Gastrocnemius medialis (tissue), 4 donors: ENCODE measurements at regions of chr17 and their contacts with region 1.

Region 1: DNA sequence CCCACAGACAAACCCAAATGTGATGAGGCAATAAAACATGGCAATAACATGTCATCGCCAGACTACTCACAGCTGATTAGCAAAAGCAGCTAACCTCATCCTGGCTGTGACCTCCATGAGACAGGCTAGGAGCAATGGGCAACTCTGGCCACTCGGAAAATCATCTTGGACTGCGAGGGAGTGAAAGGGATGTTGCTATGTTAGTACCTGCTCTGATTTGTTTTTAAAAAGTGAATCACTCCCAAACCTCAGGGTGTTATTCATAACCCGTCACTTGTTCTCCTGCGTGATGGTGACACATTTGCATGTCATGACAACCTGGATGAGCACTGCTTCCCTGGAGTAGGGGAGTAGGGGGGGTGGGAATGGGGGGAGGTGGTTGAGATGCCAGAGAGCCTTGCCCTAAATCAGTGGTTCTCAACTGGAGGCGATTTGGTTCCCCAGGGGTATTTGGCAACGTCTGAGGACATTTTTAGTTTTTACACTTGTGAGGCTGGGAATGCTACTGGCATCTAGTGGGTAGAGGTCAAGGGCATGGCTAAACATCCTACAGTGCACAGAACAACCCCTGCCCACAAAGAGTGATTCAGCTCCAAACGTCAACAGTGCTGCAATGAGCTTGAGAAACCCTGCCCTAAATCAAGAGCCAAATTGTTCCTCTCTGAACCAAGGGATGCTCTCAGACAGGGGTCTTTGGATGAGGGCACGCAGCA is 241.7 kb downstream of the SOX9 start:
- DNase-seq: no peak
- ATAC-seq: no peak
- H3K4me3 ChIP-seq: no peak overlapping the region
- H3K27ac ChIP-seq: no peak overlapping the region
- H3K4me1 ChIP-seq: no peaks in the 10 kb centered on the region
- H3K27me3 ChIP-seq: no peaks in the 10 kb centered on the region
- CTCF ChIP-seq: no peak
- POLR2A ChIP-seq: no peak

Region 2: GRCh38 chr17:72306037-72306436 is 56.5 kb before region 1 on chr17:
- in situ Hi-C with region 1: loop called in 1 of 4 experiments (anchors 10 kb)
- intact Hi-C with region 1: no loop called
- DNase-seq: peak in 1 of 2 donors; percentile 35
- ATAC-seq: peak; percentile 53 to 56
- H3K4me3 ChIP-seq: no peak overlapping the region
- H3K27ac ChIP-seq: no peak overlapping the region
- H3K4me1 ChIP-seq: no peaks in the 10 kb centered on the region
- H3K27me3 ChIP-seq: no peaks in the 10 kb centered on the region
- CTCF ChIP-seq: no peak
- POLR2A ChIP-seq: no peak

Region 3: DNA sequence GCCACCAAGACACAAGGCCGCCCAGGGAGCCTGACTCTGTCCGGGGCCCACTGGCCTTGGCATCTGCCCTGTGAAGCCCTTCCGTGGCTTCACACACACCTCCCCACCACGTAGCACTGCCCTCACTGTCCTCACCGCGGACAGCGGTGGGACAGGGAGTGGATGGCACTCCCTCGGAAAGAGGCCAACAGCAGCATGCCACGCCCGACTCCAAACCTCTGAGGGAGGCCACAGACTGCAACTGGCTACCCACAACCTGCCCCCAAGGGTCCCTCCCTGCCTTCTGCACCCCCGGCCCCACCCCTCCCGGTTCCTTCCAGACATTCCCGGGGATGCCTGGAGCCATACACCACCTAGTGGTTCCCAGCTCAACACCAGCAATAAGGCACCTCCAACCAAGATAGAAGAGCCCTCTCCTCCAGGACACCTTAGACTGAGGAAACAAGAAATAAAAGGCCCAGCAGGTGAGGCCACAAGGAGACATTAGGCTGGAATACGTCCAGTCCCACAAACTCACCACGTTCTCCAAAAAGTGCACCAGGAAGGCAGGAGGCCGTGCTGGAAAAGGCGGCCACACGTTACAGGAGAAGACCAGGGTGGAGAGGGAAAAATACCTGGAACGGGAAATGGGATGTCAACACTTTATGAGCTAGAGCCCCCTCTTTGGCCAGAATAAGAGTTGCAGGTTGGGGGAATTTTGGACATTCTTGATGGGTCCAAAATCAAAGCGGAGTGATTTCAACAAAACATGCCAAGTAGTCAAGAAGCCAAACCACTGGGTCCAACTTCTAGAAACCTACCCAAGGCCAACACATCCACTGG is 68.3 kb after region 1 on chr17:
- in situ Hi-C with region 1: no loop called
- intact Hi-C with region 1: no loop called
- DNase-seq: no peak
- ATAC-seq: no peak
- H3K4me3 ChIP-seq: no peak overlapping the region
- H3K27ac ChIP-seq: no peak overlapping the region
- H3K4me1 ChIP-seq: no peaks in the 10 kb centered on the region
- H3K27me3 ChIP-seq: no peaks in the 10 kb centered on the region
- CTCF ChIP-seq: no peak
- POLR2A ChIP-seq: no peak